CD14-positive monocyte (primary cell): ENCODE measurements at regions of chr3 and their contacts with region 1.

Region 1: GRCh38 chr3:45464336-45465170 is 76.2 kb downstream of the LARS2 start:
- DNase-seq: peak; percentile 53 to 72 (median 69)
- H3K4me3 ChIP-seq: peak overlapping the region in 1 of 3 experiments; percentile 44
- H3K4me3 Mint-ChIP-seq: peak overlapping the region; percentile 21 to 57
- H3K27ac ChIP-seq: peak overlapping the region; percentile 11 to 73
- H3K27ac Mint-ChIP-seq: peak overlapping the region; percentile 80 to 95 (median 90)
- H3K4me1 ChIP-seq: peaks cover 17 to 21% of the 10 kb centered on the region in 2 donors
- H3K4me1 Mint-ChIP-seq: peaks cover 28% of the 10 kb centered on the region
- H3K27me3 ChIP-seq: no peaks in the 10 kb centered on the region
- H3K27me3 Mint-ChIP-seq: peaks cover 0 to 2% (median 0%) of the 10 kb centered on the region in 3 donors
- CTCF ChIP-seq: no peak

Region 2: GRCh38 chr3:45178183-45179023 is 286.1 kb before region 1 on chr3:
- intact Hi-C with region 1: no loop called
- DNase-seq: no peak
- H3K4me3 ChIP-seq: no peak overlapping the region
- H3K4me3 Mint-ChIP-seq: no peak overlapping the region
- H3K27ac ChIP-seq: no peak overlapping the region
- H3K27ac Mint-ChIP-seq: no peak overlapping the region
- H3K4me1 ChIP-seq: peaks cover 4 to 5% of the 10 kb centered on the region in 2 donors
- H3K4me1 Mint-ChIP-seq: peaks cover 5% of the 10 kb centered on the region
- H3K27me3 ChIP-seq: no peaks in the 10 kb centered on the region
- H3K27me3 Mint-ChIP-seq: peaks cover 1 to 8% (median 6%) of the 10 kb centered on the region in 3 donors
- CTCF ChIP-seq: no peak

Region 3: GRCh38 chr3:45210308-45211041 is 254.1 kb before region 1 on chr3:
- intact Hi-C with region 1: no loop called
- DNase-seq: peak; percentile 78 to 82 (median 79)
- H3K4me3 ChIP-seq: no peak overlapping the region
- H3K4me3 Mint-ChIP-seq: peak overlapping the region in 1 of 2 donors; percentile 63
- H3K27ac ChIP-seq: no peak overlapping the region
- H3K27ac Mint-ChIP-seq: peak overlapping the region in 2 of 7 donors; percentile 54 to 63
- H3K4me1 ChIP-seq: no peaks in the 10 kb centered on the region
- H3K4me1 Mint-ChIP-seq: peaks cover 16% of the 10 kb centered on the region
- H3K27me3 ChIP-seq: no peaks in the 10 kb centered on the region
- H3K27me3 Mint-ChIP-seq: peaks cover 0 to 2% (median 0%) of the 10 kb centered on the region in 3 donors
- CTCF ChIP-seq: peak; percentile 86

Region 4: GRCh38 chr3:45426161-45426560 is 38.4 kb before region 1 on chr3:
- intact Hi-C with region 1: loop called in 1 of 2 experiments (anchors 2 kb)
- DNase-seq: no peak
- H3K4me3 ChIP-seq: no peak overlapping the region
- H3K4me3 Mint-ChIP-seq: no peak overlapping the region
- H3K27ac ChIP-seq: no peak overlapping the region
- H3K27ac Mint-ChIP-seq: no peak overlapping the region
- H3K4me1 ChIP-seq: no peaks in the 10 kb centered on the region
- H3K4me1 Mint-ChIP-seq: no peaks in the 10 kb centered on the region
- H3K27me3 ChIP-seq: no peaks in the 10 kb centered on the region
- H3K27me3 Mint-ChIP-seq: no peaks in the 10 kb centered on the region
- CTCF ChIP-seq: no peak

Region 5: GRCh38 chr3:45593708-45594609 is 129.4 kb after region 1 on chr3:
- intact Hi-C with region 1: no loop called
- DNase-seq: peak; percentile 57 to 60 (median 58)
- H3K4me3 ChIP-seq: peak overlapping the region; percentile 57 to 91 (median 85)
- H3K4me3 Mint-ChIP-seq: peak overlapping the region; percentile 91 to 93
- H3K27ac ChIP-seq: peak overlapping the region; percentile 71 to 82
- H3K27ac Mint-ChIP-seq: peak overlapping the region; percentile 90 to 95 (median 94)
- H3K4me1 ChIP-seq: peaks cover 57 to 61% of the 10 kb centered on the region in 2 donors
- H3K4me1 Mint-ChIP-seq: peaks cover 55% of the 10 kb centered on the region
- H3K27me3 ChIP-seq: no peaks in the 10 kb centered on the region
- H3K27me3 Mint-ChIP-seq: peaks cover 3 to 5% (median 4%) of the 10 kb centered on the region in 3 donors
- CTCF ChIP-seq: no peak